Spleen (tissue), 13 donors: ENCODE measurements at regions of chr11 and their contacts with region 1.

Region 1: DNA sequence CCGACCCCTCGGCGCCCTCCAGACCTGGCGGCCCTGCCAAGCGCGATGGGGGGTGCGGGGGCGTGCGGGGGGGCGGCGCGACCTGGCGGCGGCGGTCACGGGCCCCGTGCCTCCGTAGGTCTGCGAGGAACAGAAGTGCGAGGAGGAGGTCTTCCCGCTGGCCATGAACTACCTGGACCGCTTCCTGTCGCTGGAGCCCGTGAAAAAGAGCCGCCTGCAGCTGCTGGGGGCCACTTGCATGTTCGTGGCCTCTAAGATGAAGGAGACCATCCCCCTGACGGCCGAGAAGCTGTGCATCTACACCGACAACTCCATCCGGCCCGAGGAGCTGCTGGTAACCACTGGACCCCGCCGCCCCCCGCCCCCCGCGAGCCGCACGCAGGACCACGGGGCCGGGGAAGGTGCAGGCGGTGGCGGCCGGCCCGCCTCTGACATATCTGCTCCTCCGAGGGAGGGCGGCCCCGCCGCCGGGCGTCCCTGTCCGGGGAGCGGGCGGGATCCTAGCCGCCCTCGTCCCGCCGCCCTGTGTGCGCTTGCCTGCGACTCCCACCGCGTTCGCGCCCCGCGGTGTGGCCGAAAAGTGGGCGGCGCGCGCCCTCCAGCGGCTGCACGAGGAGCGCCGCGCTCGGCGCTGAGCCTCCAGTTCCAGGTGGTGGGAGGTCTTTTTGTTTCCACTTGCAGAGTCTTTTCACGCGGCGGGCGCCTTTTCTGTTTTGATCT is 2.1 kb downstream of the CCND1 start:
- DNase-seq: peak; percentile 96
- H3K4me3 ChIP-seq: peak overlapping the region; percentile 68 to 99 (median 92)
- H3K27ac ChIP-seq: peak overlapping the region; percentile 66 to 89 (median 86)
- H3K4me1 ChIP-seq: peaks cover 40 to 98% (median 70%) of the 10 kb centered on the region in 6 donors
- H3K27me3 ChIP-seq: peaks cover 0 to 60% (median 28%) of the 10 kb centered on the region in 7 donors
- CTCF ChIP-seq: peak; percentile 70 to 98 (median 95)
- POLR2A ChIP-seq: no peak

Region 2: DNA sequence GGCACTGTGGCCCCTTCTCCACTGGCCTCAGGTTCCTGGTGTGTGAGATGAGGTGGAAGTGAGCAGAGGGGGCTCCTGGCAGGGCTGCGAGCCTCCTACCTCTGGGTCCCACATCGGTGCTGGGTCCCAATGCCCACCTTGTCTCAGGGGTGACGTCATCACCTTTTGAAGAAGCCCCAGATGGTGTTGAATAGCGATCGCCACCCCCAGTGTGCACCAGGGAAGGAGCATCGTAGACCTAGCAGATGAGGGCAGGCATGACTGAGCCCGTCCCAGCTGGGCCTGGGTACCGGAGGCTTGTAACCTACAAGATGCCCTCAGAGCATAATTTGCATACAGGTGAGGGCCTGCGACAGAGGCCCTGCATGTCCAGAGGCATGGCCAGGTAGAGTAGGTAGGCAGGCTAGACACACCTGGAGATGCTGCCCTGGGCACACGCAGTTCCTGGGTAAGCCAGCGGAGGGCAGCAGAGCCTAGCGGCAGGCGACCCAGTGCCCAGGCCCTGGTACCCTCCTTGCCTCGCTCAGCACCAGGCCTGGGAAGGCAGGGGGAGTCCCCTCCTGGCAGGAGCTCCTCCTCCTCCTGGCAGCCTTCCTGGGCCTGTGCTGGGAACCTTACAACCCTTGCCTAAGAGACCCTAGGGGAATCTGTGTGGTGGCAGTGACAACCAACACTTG is 541.8 kb before region 1 on chr11:
- intact Hi-C with region 1: loop called (anchors 2 kb)
- DNase-seq: peak; percentile 93
- H3K4me3 ChIP-seq: no peak overlapping the region
- H3K27ac ChIP-seq: no peak overlapping the region
- H3K4me1 ChIP-seq: peaks cover 0 to 9% (median 2%) of the 10 kb centered on the region in 6 donors
- H3K27me3 ChIP-seq: peaks cover 0 to 37% (median 0%) of the 10 kb centered on the region in 7 donors
- CTCF ChIP-seq: peak; percentile 96 to 99 (median 97)
- POLR2A ChIP-seq: no peak

Region 3: DNA sequence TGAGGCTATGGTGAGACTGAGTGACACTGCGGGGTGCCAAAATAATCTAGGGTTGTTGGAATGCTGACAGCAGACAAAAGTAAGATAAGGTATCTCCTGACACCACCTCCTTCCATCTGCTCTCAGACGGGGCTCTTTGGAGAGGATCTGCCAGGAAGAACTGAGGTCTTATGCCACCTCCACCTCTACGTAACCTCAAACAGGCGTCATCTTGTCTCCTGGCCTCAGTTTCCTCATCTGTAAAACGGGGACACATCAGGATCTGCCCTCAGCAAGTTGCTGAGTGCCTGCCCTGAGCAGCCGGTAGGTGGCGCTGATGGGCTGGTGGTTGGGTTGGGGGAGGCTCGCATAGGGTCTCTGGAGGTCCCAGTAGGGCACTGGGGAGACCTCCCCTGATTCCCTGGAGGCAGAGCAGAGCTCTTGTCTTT is 350.8 kb before region 1 on chr11:
- intact Hi-C with region 1: loop called (anchors 5 kb)
- DNase-seq: peak; percentile 88
- H3K4me3 ChIP-seq: no peak overlapping the region
- H3K27ac ChIP-seq: no peak overlapping the region
- H3K4me1 ChIP-seq: peaks cover 12 to 54% (median 42%) of the 10 kb centered on the region in 6 donors
- H3K27me3 ChIP-seq: no peaks in the 10 kb centered on the region
- CTCF ChIP-seq: peak; percentile 68 to 93 (median 85)
- POLR2A ChIP-seq: no peak